Aorta (tissue), 5 donors: ENCODE measurements at regions of chr6 and their contacts with region 1.

Region 1: DNA sequence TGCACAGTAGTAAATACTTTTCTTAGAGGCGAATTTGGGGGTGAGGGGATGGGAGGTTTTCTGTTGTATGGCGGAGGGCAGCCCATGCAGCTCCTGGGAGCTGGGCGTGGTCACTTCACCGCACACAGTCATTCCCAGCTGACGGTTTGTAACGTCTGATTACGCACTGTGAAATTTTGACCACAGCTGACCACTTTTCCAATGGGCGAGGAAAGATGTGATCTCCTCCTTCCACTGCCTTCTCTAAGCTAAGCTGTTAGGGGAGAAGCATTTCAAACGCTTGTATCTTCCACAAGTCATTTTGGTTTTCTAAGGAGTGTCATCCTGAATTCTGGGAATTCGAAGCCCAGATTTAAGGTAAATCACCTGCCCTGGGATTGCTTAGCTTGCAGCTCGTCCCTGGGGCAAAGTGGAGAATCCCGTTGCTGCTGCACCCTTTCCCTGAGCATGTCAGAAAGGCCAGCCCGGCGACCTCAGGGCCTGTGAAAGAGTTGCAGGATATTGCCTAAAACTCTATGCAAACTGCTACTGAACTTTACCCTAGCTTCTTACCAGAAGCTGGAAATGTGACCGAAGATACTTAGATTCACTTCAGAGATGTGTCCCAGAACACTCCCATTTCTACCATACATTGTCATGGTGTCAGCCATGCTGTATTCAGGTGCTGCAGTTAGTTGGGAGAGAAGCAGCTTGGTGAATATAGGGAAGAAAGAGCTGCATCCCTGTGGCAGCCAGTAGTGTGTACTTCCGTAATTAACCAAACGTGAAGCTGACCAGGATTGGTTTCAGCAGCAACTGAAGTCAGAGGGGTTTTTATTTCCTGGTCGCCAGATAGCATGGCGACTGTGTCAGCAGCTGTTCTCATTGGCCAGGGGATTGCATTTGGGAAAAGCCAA is 58.9 kb downstream of the RREB1 start:
- DNase-seq: no peak
- ATAC-seq: no peak
- H3K4me3 ChIP-seq: no peak overlapping the region
- H3K27ac ChIP-seq: no peak overlapping the region
- H3K4me1 ChIP-seq: peaks cover 4 to 13% of the 10 kb centered on the region in 2 donors
- H3K27me3 ChIP-seq: no peaks in the 10 kb centered on the region

Region 2: DNA sequence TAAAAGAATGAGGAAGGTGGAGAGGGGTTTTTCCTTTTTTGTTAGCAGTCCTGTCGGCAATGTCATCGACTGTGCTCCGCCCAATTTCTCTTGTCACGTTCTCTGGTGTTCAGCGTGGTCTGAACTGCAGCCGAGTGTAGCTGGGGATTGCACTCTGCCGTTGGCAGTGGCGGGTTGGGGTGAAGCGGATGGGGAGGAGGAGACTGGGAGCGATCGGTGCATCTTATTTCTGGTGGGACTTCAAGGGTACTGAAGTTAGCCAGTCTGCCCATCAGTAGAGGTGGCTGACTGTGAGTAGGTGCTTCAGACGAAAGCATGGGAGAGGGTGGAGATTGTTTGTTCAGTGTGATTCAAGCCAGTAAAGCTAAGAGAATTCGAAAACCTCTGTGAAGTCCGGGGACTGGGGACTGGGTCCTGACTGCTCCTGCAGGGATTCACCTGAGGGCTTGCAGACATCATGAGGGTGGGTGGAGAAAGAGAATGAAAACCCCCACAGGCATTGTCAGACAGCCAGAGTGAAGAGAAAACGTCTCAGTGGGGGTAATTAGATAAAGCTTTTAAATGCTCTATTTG is 53.8 kb before region 1 on chr6:
- intact Hi-C with region 1: loop called (anchors 5 to 10 kb)
- DNase-seq: no peak
- ATAC-seq: no peak
- H3K4me3 ChIP-seq: no peak overlapping the region
- H3K27ac ChIP-seq: no peak overlapping the region
- H3K4me1 ChIP-seq: peaks cover 4 to 6% of the 10 kb centered on the region in 2 donors
- H3K27me3 ChIP-seq: no peaks in the 10 kb centered on the region

Region 3: DNA sequence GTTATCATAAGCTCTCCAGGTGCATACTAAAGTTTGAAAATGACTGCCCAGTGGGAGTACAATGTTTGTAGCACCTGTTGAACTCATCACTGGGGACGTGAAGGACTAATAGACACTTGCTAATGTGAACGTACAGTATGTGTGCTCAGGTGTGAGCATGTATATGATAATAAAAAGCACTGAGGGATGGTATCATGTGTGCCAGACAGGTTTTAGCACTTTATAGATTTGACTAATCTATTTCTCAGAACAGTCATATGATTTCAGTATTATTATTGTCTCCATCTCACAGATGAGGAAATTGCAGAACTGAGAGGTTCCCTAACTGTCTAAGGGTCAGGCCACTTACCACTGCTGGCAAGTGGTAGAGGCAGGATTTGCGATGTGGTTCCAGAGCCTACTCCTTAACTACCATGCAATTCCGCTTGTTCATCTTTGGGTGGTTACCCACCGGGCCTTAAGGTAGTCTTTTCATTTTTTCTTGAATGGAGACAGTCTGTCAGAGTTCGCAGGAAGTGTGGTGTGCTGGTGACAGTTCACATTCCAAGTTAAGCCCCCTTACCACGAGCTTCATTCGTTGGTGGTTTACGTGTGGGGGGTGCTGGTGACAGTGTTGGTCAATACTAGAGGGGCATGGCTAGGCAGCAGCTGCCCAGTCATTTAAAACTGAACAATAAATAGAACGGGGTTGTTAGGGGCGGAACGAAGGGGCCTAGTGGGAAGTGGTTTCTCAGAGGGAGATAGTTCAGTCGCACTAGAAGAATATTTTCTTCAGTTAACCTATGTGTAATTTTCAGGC is 12.1 kb before region 1 on chr6:
- intact Hi-C with region 1: no loop called
- DNase-seq: no peak
- ATAC-seq: no peak
- H3K4me3 ChIP-seq: no peak overlapping the region
- H3K27ac ChIP-seq: no peak overlapping the region
- H3K4me1 ChIP-seq: peaks cover 4 to 7% of the 10 kb centered on the region in 2 donors
- H3K27me3 ChIP-seq: no peaks in the 10 kb centered on the region

Region 4: DNA sequence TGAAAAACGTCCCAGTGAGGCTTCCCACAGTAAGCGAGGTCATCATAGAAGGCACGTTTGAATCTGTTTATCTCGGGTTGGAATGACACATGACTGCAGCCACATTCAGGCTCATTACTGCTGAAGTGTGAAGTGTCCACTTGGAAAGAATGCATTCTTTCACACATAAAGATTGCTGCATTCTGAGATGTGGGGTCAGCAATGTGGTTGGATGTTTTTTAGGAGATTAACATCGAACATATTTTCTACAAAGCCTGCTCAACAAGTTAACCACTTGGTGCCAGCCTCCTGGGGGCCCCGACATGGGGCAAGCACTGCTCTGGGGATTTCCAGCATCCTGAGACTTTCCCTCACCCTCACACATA is 639.2 kb after region 1 on chr6:
- intact Hi-C with region 1: no loop called
- DNase-seq: no peak
- ATAC-seq: no peak
- H3K4me3 ChIP-seq: no peak overlapping the region
- H3K27ac ChIP-seq: no peak overlapping the region
- H3K4me1 ChIP-seq: no peaks in the 10 kb centered on the region
- H3K27me3 ChIP-seq: peaks cover 0 to 3% of the 10 kb centered on the region in 2 donors